RWPE1 (cell line): ENCODE measurements at regions of chr19 and their contacts with region 1.

Region 1: GRCh38 chr19:54023191-54023590 is 31.8 kb downstream of the CACNG6 start:
- DNase-seq: no peak
- H3K27ac ChIP-seq: no peak overlapping the region
- CTCF ChIP-seq: no peak

Region 2: GRCh38 chr19:53808710-53809125 is 214.5 kb before region 1 on chr19:
- CTCF ChIA-PET with region 1: interaction called, 12 read pairs
- POLR2A ChIA-PET with region 1: no interaction called
- DNase-seq: peak; percentile 14
- H3K27ac ChIP-seq: no peak overlapping the region
- CTCF ChIP-seq: peak; percentile 62

Region 3: DNA sequence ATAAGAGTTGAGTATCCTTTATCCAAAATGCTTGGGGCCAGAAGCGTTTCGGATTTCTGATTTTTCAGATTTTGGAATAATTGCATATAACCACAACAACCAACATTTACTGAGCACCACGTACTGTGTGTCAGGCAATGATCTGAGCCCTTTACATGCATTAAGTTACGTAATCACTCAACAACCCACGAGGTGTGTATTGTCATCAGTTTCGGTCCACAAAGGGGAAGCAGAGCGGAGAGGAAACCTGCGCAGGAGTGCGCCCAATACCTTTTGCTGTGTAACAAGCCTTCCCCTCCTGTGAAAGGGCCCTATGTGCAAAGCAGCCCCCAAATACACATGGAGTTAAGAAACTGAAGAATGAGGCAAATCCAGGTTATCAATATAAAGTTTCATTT is 178.3 kb before region 1 on chr19:
- CTCF ChIA-PET with region 1: interaction called, 10 read pairs
- POLR2A ChIA-PET with region 1: no interaction called
- DNase-seq: no peak
- H3K27ac ChIP-seq: no peak overlapping the region
- CTCF ChIP-seq: no peak